B cell (primary cell): ENCODE measurements at regions of chr10 and their contacts with region 1.

Region 1: GRCh38 chr10:6108603-6109443 is 20.0 kb downstream of the RBM17 start:
- DNase-seq: peak; percentile 72
- ATAC-seq: peak; percentile 80
- H3K4me3 ChIP-seq: no peak overlapping the region
- H3K4me3 Mint-ChIP-seq: no peak overlapping the region
- H3K27ac ChIP-seq: no peak overlapping the region
- H3K27ac Mint-ChIP-seq: no peak overlapping the region
- H3K4me1 ChIP-seq: peaks cover 7 to 9% of the 10 kb centered on the region in 2 donors
- H3K4me1 Mint-ChIP-seq: peaks cover 12% of the 10 kb centered on the region
- H3K27me3 ChIP-seq: no peaks in the 10 kb centered on the region
- H3K27me3 Mint-ChIP-seq: no peaks in the 10 kb centered on the region
- CTCF ChIP-seq: peak; percentile 87

Region 2: DNA sequence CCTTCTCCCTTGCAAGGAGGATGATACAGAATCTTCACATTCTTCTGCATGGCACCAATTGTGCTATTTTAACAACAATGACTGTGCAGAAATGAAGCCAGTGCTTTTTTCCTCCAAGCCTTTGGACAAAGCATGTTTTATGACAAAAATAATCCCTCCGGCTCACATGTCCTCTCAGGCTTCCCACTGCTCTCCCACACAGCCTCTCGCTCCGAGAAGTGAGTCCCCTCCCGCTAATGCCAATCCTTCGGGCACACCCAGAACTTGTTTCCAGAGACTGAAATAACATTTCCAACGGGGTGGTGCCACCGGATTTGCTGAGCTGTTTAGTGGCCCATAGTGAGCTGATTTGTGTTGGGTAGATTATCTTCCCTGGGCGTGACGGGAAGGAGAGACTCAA is 15.8 kb after region 1 on chr10:
- CTCF ChIA-PET with region 1: no interaction called
- POLR2A ChIA-PET with region 1: no interaction called
- intact Hi-C with region 1: no loop called
- DNase-seq: no peak
- ATAC-seq: no peak
- H3K4me3 ChIP-seq: no peak overlapping the region
- H3K4me3 Mint-ChIP-seq: no peak overlapping the region
- H3K27ac ChIP-seq: no peak overlapping the region
- H3K27ac Mint-ChIP-seq: no peak overlapping the region
- H3K4me1 ChIP-seq: no peaks in the 10 kb centered on the region
- H3K4me1 Mint-ChIP-seq: peaks cover 3% of the 10 kb centered on the region
- H3K27me3 ChIP-seq: peaks cover 0 to 25% (median 1%) of the 10 kb centered on the region in 4 experiments
- H3K27me3 Mint-ChIP-seq: peaks cover 19% of the 10 kb centered on the region
- CTCF ChIP-seq: no peak

Region 3: GRCh38 chr10:6409971-6410651 is 301.3 kb after region 1 on chr10:
- CTCF ChIA-PET with region 1: interaction called, 42 read pairs
- POLR2A ChIA-PET with region 1: no interaction called
- intact Hi-C with region 1: loop called (anchors 1 kb)
- DNase-seq: no peak
- ATAC-seq: no peak
- H3K4me3 ChIP-seq: no peak overlapping the region
- H3K4me3 Mint-ChIP-seq: no peak overlapping the region
- H3K27ac ChIP-seq: no peak overlapping the region
- H3K27ac Mint-ChIP-seq: no peak overlapping the region
- H3K4me1 ChIP-seq: peaks cover 0 to 5% of the 10 kb centered on the region in 2 donors
- H3K4me1 Mint-ChIP-seq: peaks cover 9% of the 10 kb centered on the region
- H3K27me3 ChIP-seq: peaks cover 0 to 4% (median 2%) of the 10 kb centered on the region in 4 experiments
- H3K27me3 Mint-ChIP-seq: peaks cover 29% of the 10 kb centered on the region
- CTCF ChIP-seq: no peak